Dendritic cell treated with granulocyte-macrophage colony-stimulating factor and Interleukin-4, amounts not matched to agents 40 ng/mL and 50 ng/mL, for 4 days (primary cell): ENCODE measurements at regions of chr7 and their contacts with region 1.

Region 1: DNA sequence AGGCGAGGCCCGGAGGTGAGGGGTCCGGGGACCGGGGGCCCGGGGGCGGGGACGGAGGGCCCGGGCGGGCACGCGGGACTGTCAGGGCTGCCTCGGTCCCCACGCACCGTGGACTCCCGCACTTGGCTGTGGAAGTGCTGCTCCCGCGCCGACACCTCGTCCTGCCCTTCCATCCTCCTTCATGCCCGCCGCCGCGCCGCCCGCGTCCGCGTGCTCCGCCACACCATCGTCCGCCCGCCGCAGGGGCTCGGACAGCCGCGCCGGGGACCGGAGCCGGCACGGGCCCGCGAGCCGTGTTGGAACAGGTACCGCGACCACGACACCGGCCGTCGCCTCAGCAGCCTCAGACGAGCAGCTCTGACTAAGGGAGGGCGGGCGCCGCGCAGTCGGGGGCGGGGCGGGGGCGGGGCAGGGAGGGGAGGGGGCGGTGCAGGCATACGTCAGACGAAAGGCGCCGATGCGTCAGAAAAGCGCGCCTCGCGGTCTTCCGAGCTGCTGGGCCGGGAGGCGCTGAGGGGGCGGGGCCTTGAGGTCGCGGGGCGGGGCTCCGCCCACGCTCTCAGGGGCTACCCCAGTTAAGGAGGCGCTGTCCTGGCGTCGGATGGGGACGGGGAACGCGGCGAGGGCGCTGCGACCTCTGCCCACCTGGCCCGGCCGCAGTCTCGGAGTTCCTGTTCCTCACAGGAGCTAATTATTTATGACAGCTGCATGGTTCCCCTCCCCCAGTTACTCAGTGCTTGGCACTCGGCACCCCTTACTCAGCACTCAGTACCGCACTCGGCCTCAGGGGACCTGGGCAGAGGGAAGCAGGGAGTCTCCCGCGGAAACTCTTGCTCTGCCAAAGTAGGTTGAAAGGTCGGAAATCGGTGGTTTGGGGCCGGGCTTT is at the start of gene LMBR1:
- H3K4me3 Mint-ChIP-seq: peak within 1 kb of the TSS; percentile 90
- H3K27ac Mint-ChIP-seq: peak within 1 kb of the TSS; percentile 96
- H3K4me1 Mint-ChIP-seq: peaks cover 42% of the 10 kb centered on the region
- H3K27me3 Mint-ChIP-seq: no peaks in the 10 kb centered on the region

Region 2: GRCh38 chr7:156640257-156640948 is 252.7 kb before region 1 on chr7 and contains the start of gene RNF32:
- intact Hi-C with region 1: loop called (anchors 5 kb)
- H3K4me3 Mint-ChIP-seq: peak within 1 kb of the TSS; percentile 84
- H3K27ac Mint-ChIP-seq: peak within 1 kb of the TSS; percentile 86
- H3K4me1 Mint-ChIP-seq: peaks cover 14% of the 10 kb centered on the region
- H3K27me3 Mint-ChIP-seq: peaks cover 33% of the 10 kb centered on the region

Region 3: DNA sequence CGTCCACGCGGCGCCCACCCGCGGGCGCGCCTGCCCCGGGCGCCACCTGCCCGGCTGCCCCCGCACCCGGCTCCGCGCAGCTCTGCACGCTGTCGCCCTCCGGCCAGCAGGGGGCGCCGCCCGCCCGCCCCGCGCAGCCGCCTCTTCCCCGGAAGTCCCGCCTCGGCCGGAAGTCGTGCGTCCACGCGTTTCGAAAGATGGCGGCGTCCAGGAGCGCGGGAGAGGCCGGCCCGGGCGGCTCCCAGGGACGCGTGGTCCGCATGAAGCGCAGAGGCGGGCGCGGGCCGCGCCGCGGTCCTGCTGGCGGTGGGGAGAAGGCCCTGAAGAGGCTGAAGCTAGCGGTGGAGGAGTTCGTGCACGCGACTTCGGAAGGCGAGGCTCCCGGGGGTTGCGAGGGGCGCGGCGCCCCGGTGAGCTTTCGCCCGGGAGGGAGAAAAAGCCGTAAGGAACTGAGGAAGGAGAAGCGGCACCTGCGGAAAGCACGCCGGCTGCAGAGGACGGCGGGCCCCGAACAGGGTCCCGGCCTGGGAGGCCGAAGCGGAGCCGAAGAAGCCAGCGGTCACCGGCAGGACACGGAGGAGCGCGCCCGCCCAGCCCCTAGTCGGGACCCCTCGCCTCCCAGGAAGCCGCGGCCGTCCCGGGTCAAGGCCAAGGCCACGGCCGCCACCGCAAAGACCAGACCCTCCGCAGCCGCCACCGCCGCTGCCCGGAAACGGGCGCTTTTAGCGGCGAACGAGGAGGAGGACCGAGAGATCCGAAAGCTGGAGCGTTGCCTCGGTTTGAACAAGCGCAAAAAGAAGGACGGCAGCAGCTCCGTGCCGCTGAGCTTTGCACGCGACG is 56.7 kb after region 1 on chr7 and contains the start of gene NOM1:
- intact Hi-C with region 1: loop called (anchors 2 kb)
- H3K4me3 Mint-ChIP-seq: peak within 1 kb of the TSS; percentile 86
- H3K27ac Mint-ChIP-seq: peak within 1 kb of the TSS; percentile 77
- H3K4me1 Mint-ChIP-seq: peaks cover 18% of the 10 kb centered on the region
- H3K27me3 Mint-ChIP-seq: peaks cover 18% of the 10 kb centered on the region

Region 4: GRCh38 chr7:157336383-157337315 is 443.6 kb after region 1 on chr7 and contains the start of gene DNAJB6:
- intact Hi-C with region 1: loop called (anchors 5 kb)
- H3K4me3 Mint-ChIP-seq: peak within 1 kb of the TSS; percentile 78
- H3K27ac Mint-ChIP-seq: peak within 1 kb of the TSS; percentile 97
- H3K4me1 Mint-ChIP-seq: peaks cover 45% of the 10 kb centered on the region
- H3K27me3 Mint-ChIP-seq: no peaks in the 10 kb centered on the region